Prostate gland (tissue), 2 donors: ENCODE measurements at regions of chr10 and their contacts with region 1.

Region 1: DNA sequence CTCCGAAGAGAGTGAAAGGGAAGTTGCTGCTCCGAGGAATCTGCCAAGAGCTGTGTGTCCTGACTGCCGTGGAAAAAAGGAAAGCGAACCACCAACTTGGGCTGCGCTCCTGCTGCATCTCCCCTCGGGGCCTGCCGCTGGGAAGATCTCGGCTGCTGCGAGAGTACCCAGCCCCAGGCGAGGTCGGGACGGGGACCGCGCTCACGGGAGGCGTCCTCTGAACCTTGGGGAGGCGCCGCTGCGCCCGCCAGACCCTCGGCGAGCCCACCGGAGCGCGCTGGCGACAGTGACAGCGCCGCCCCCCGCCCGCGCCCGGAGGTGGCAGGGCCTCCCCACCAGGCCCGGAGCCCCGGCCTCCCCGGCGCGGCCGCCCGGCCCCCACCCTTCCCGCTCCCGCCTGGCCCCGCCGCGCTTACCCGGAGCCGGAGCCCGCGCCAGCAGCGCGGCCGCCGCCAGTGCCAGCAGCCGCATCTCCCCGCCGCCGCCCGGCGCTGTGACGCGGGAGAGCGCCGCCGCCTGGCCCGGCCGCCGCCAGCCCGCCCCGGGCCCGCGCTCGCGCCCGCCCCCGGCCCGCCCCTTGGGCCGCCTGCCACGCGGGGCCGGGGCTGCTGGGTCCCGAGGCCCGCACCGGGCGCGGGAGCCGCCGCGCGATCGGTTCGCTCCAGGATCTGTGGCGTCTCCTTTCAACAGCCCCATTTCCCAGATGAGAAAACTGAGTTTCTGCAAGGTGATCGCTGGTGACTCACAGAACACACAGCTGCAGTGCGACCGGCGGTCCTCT is at the start of gene VSTM4:
- DNase-seq: no peak
- H3K4me3 ChIP-seq: peak within 1 kb of the TSS; percentile 55 to 60
- H3K27ac ChIP-seq: peak within 1 kb of the TSS; percentile 76 to 81
- H3K4me1 ChIP-seq: no peaks in the 10 kb centered on the region
- H3K27me3 ChIP-seq: no peaks in the 10 kb centered on the region
- CTCF ChIP-seq: no peak
- POLR2A ChIP-seq: no peak
- total RNA-seq, gene VSTM4: 6.9 to 36.0 TPM

Region 2: DNA sequence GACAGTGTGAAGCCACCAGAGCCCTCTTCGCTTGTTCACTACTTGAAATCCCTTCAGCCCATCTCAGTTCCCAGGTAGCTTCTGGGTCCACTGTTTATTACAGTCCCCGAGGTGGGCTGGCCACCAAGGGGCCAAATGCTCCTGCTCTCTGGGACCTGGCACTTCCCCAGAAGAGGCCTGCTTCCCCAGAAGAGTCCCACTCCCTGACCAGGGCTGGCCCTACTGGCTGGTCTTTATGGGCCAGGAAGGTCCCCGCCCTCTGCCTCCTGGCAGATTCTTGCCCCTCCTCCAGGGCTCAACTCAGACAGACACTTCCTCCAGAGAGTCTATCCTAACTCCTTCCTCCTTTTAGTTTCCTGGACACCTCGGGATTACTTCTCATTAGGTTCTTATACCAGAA is 104.9 kb before region 1 on chr10:
- intact Hi-C with region 1: loop called (anchors 5 kb)
- DNase-seq: no peak
- H3K4me3 ChIP-seq: no peak overlapping the region
- H3K27ac ChIP-seq: no peak overlapping the region
- H3K4me1 ChIP-seq: no peaks in the 10 kb centered on the region
- H3K27me3 ChIP-seq: no peaks in the 10 kb centered on the region
- CTCF ChIP-seq: no peak
- POLR2A ChIP-seq: no peak

Region 3: DNA sequence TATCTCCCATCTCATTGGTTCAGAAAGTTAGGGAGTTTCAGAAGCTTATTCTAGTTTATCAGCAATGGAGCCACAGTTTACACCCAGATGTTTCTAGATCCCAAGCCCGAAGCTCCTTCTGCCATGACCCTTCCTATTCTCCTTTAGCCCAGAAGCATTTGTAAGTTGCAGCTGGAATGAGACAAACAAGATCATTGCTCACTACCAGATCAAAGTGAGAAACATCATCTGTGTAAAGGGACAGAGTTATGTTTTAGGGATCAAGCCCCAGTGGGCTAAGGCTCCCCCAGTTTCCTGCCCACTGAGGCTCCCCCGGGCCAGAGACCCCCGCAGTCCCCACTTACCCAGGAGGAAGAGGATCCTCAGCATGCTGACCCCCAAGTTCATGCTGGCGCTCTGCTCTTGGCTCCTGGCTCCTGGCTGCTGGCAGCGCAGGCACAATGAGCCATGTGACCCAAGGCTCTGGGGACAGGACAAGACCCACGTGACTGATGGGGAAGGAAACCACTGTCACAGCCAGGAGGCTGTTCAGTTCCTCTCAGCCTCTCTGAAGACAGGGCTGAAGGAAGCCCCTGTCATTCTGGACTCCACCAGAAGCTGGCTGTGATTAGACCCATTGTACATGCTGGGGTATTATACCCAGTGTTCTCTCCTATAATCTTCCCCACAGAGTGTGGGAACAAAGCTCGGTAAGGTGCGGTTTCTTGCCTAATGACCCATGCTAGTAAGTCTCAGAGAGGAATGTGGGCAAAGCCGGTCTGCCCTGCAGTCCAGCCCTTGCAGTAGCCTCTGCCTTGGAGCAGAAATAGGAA is 73.0 kb after region 1 on chr10 and contains the start of gene TMEM273:
- intact Hi-C with region 1: no loop called
- DNase-seq: no peak
- H3K4me3 ChIP-seq: no peak within 1 kb of the TSS
- H3K27ac ChIP-seq: no peak within 1 kb of the TSS
- H3K4me1 ChIP-seq: no peaks in the 10 kb centered on the region
- H3K27me3 ChIP-seq: no peaks in the 10 kb centered on the region
- CTCF ChIP-seq: no peak
- POLR2A ChIP-seq: no peak
- total RNA-seq, gene TMEM273: 1.1 to 13.0 TPM